ENCODE measurements at regions of chr12 and their contacts with region 1.

Region 1: DNA sequence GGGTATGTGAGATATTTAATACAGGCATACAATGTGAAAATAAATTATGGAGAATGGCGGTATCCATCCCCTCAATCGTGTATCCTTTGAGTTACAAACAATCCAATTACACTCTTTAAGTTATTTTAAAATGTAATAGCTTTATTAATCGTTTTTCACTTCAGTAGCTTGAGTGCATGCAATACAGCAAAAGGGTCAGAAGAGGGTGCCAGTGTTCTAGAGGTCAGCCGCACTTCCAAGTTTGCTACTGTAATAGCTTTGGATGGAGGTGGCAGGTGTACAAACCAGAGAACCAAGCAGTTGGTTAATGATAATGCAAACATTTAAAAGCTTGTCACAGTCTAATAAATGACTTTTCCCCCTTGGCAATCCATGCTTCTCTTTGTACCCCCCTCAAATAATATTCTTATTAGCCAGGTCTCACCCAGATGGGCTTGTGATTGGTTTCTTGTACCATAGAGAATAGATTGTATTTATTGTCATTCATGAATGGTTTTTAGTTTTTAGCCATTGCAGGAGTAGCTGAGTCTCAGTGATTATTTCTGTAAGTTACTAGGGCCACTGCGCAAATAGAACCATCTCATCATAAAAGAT is 127.0 kb downstream of the ERC1 start:
- DNase-seq: peak; percentile 65 to 71
- H3K4me3 ChIP-seq: no peak overlapping the region
- H3K27ac ChIP-seq: no peak overlapping the region
- H3K4me1 ChIP-seq: peaks cover 42% of the 10 kb centered on the region
- H3K27me3 ChIP-seq: no peaks in the 10 kb centered on the region
- CTCF ChIP-seq: peak; percentile 99

Region 2: DNA sequence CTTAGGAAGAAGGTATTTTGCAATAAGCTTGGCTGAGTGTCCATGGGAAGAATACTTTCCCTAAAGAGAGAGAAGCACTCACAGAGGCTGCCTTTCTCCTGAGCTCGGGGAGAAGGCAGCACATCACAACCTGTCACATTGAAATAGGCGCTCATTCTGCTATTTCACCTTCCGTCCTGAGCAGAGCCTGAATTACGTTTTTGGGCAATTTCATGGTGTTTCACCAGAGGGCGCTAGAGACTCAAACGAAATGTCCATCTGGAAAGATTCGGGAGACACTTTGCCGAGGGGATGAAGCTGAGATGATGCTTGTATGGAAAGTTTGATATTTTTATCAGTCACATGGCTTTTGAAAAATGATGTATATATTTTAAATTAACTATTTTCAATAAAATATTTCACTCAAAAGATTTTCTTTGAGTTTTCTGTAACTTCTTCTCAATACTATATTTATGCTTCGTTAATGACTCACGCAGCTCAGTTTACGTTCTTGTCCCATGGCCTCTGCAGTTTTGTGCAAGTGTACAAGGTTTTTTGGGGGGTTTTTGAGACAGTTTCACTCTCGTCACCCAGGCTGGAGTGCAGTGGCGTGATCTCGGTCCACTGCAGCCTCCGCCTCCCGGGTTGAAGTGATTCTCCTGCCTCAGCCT is 675.7 kb before region 1 on chr12:
- CTCF ChIA-PET with region 1: interaction called, 4 read pairs
- POLR2A ChIA-PET with region 1: no interaction called
- intact Hi-C with region 1: loop called (anchors 10 kb)
- DNase-seq: peak in 1 of 2 experiments; percentile 60
- H3K4me3 ChIP-seq: no peak overlapping the region
- H3K27ac ChIP-seq: no peak overlapping the region
- H3K4me1 ChIP-seq: no peaks in the 10 kb centered on the region
- H3K27me3 ChIP-seq: no peaks in the 10 kb centered on the region
- CTCF ChIP-seq: peak; percentile 95

Region 3: GRCh38 chr12:578748-579449 is 539.2 kb before region 1 on chr12:
- CTCF ChIA-PET with region 1: no interaction called
- POLR2A ChIA-PET with region 1: no interaction called
- intact Hi-C with region 1: no loop called
- DNase-seq: peak; percentile 25 to 38
- H3K4me3 ChIP-seq: no peak overlapping the region
- H3K27ac ChIP-seq: no peak overlapping the region
- H3K4me1 ChIP-seq: peaks cover 7% of the 10 kb centered on the region
- H3K27me3 ChIP-seq: no peaks in the 10 kb centered on the region
- CTCF ChIP-seq: no peak

Region 4: GRCh38 chr12:810671-811415 is 307.2 kb before region 1 on chr12:
- CTCF ChIA-PET with region 1: no interaction called
- POLR2A ChIA-PET with region 1: no interaction called
- intact Hi-C with region 1: loop called (anchors 10 kb)
- DNase-seq: no peak
- H3K4me3 ChIP-seq: no peak overlapping the region
- H3K27ac ChIP-seq: no peak overlapping the region
- H3K4me1 ChIP-seq: no peaks in the 10 kb centered on the region
- H3K27me3 ChIP-seq: no peaks in the 10 kb centered on the region
- CTCF ChIP-seq: no peak

Region 5: GRCh38 chr12:1130164-1130563 is 12.1 kb after region 1 on chr12:
- CTCF ChIA-PET with region 1: interaction called, 18 read pairs
- POLR2A ChIA-PET with region 1: interaction called, 5 read pairs
- intact Hi-C with region 1: no loop called
- DNase-seq: peak; percentile 74 to 98
- H3K4me3 ChIP-seq: peak overlapping the region; percentile 13; the same call in 1 of the 2 replicates
- H3K27ac ChIP-seq: peak overlapping the region; percentile 69
- H3K4me1 ChIP-seq: peaks cover 34% of the 10 kb centered on the region
- H3K27me3 ChIP-seq: no peaks in the 10 kb centered on the region
- CTCF ChIP-seq: no peak

Region 6: GRCh38 chr12:1500095-1500801 is 382.2 kb after region 1 on chr12:
- CTCF ChIA-PET with region 1: interaction called, 8 read pairs
- POLR2A ChIA-PET with region 1: interaction called, 6 read pairs
- intact Hi-C with region 1: loop called (anchors 2 kb)
- DNase-seq: peak; percentile 53 to 95
- H3K4me3 ChIP-seq: no peak overlapping the region
- H3K27ac ChIP-seq: peak overlapping the region; percentile 56
- H3K4me1 ChIP-seq: peaks cover 14% of the 10 kb centered on the region
- H3K27me3 ChIP-seq: no peaks in the 10 kb centered on the region
- CTCF ChIP-seq: no peak

Region 7: GRCh38 chr12:1540690-1541089 is 422.6 kb after region 1 on chr12:
- CTCF ChIA-PET with region 1: interaction called, 4 read pairs
- POLR2A ChIA-PET with region 1: interaction called, 19 read pairs
- intact Hi-C with region 1: no loop called
- DNase-seq: peak; percentile 42 to 95
- H3K4me3 ChIP-seq: no peak overlapping the region
- H3K27ac ChIP-seq: no peak overlapping the region
- H3K4me1 ChIP-seq: peaks cover 20% of the 10 kb centered on the region
- H3K27me3 ChIP-seq: no peaks in the 10 kb centered on the region
- CTCF ChIP-seq: no peak

Region 8: DNA sequence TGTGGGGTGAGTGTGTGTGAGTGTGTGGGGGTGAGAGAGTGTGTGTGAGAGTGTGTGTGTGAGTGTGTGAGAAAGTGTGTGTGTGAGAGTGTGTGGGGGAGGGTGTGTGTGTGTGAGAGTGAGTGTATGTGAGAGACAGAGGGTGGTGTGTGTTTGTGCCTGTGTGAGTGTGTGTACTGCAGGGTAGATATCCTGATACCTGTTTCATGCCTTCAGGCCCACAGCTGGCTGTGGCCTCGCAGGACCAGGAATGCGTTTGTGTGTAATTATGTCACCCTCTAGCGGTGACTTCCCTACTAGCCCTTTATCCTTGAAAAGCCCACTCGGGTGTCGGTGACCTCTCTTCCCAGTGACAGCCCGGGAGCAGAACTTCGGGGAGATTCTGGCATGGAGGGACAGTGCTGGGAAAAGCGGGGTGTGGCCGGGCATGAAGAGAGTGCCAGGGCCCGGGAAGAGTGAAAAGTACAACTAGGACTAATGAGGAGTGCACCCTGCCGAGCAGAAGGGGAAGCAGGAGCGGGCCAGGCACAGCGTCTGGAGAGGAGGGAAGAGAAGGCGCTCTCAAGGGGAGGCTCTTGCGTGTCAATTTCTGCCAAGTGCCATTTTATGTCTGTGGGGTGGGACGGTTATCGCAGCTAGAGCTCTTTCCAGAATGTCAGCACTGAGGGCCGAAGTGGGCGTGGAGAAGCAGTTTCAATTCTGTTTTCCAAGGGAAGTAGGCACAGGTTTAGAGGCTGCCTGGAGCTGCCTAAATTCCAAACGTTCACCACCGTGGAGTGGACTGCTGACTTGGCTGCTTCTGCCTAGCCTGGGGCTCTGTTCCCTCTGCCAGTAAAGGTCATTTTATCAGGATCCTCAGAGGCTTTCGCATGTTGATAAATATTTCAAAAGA is 487.3 kb after region 1 on chr12:
- CTCF ChIA-PET with region 1: interaction called, 10 read pairs
- POLR2A ChIA-PET with region 1: interaction called, 9 read pairs
- intact Hi-C with region 1: loop called (anchors 1 kb)
- DNase-seq: peak; percentile 74 to 83
- H3K4me3 ChIP-seq: peak overlapping the region; percentile 47
- H3K27ac ChIP-seq: peak overlapping the region; percentile 64
- H3K4me1 ChIP-seq: peaks cover 29% of the 10 kb centered on the region
- H3K27me3 ChIP-seq: no peaks in the 10 kb centered on the region
- CTCF ChIP-seq: peak; percentile 90

Measured in PC-9 (cell line).